Dorsolateral prefrontal cortex (tissue), 120 donors: ENCODE measurements at regions of chr6 and their contacts with region 1.

Region 1: DNA sequence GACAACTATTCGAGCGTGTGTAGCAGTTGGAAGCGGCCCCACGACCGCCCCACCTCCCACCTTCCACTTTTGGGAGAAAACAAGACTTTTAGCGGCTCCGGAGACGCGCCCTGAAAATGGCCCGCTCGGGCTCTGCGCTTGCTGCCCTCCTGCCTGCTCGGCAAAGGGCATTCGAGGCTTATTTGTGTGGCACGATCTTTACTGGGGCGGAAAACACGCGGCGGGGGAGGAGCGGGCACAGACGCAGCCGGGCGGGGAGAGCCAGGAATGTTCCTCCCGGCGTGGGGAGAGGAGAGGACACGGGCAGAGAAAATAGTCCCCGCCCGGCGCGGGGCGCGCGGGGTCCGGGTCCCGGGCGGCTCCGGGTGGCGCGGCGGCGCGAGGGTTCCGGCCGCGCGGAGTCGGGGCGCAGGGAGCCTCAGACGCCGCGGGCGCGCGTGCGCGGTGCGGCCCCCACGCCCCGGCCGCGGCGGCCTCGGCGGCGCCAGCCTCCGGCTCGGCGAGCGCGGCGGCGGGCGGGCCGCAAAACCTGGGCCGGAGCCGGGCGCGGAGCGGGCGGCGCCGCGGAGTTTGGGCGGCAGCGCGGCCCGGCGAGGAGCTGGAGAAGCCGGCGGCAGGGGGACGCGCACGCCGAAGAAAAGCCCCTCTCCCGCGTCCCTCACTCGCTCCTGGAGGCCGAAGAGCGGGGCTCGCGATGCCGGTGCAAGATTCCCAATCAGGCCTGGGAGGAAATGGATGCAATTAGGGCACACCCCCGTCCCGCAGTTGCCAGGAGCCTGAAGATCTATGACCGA is 90.0 kb upstream of the ARID1B start:
- DNase-seq: peak; percentile 79 to 97 (median 92)
- H3K4me3 ChIP-seq: peak overlapping the region; percentile 56 to 86 (median 77)
- H3K27ac ChIP-seq: peak overlapping the region; percentile 92 to 100 (median 99)
- H3K27me3 ChIP-seq: no peaks in the 10 kb centered on the region
- CTCF ChIP-seq: peak in 4 of 56 donors; percentile 1 to 9 (median 6)

Region 2: GRCh38 chr6:156280065-156280464 is 407.1 kb before region 1 on chr6:
- intact Hi-C with region 1: loop called in 1 of 2 experiments (anchors 10 kb)
- DNase-seq: no peak
- H3K4me3 ChIP-seq: no peak overlapping the region
- H3K27ac ChIP-seq: no peak overlapping the region
- H3K27me3 ChIP-seq: no peaks in the 10 kb centered on the region
- CTCF ChIP-seq: no peak

Region 3: DNA sequence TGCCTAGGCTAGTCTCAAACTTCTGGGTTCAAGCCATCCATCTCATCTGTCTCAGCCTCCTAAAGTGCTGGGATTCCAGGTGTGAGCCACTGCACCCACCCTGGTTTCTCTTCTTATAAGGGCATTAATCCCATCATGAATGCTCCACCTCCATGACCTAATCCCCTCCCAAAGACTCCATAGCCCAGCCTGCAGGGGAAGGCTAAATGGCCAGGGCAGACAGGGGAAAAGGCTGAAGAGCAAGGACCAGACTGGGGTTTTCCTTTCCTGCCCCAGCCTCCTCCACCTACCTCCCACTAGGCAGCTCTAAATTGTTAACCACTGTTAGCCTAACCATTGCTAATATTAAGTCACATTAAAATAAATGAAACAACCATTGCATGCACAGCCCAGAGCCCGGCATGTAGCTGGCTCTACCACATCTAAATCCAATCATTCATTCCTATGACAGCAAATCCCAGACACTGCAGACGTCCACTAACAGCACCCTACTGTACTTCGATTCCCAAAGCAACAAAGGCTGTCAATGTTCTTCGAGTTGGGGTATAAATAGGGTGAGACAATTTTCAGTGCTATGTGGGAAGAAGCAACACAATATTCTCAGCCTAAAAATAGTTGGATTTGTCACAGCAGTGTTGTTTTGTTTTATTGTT is 153.2 kb before region 1 on chr6:
- intact Hi-C with region 1: no loop called
- DNase-seq: no peak
- H3K4me3 ChIP-seq: peak overlapping the region in 1 of 59 donors; percentile 17
- H3K27ac ChIP-seq: peak overlapping the region in 8 of 59 donors; percentile 4 to 66 (median 30)
- H3K27me3 ChIP-seq: no peaks in the 10 kb centered on the region
- CTCF ChIP-seq: no peak

Region 4: DNA sequence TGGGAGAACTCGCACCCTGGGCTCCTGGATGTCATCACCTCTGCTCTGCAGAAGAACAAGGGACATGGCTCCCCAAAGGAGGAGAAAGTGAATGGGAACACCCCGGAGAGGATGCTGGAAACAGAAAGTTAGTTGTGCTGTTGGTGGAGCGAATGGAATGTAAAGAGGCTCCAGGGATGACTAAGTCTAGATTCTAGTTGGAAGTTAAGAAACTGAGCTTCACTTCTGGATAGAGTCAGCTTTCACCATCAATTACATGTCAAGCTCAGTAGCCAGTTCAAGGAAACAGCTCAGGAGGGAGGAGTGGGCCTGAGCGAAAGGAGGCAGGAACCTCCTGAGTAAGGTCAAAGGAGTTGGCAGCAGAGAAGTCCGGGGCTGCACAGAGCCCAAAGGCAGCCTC is 42.1 kb before region 1 on chr6:
- intact Hi-C with region 1: no loop called
- DNase-seq: no peak
- H3K4me3 ChIP-seq: no peak overlapping the region
- H3K27ac ChIP-seq: no peak overlapping the region
- H3K27me3 ChIP-seq: no peaks in the 10 kb centered on the region
- CTCF ChIP-seq: no peak

Region 5: GRCh38 chr6:156729248-156729647 is 42.1 kb after region 1 on chr6:
- intact Hi-C with region 1: no loop called
- DNase-seq: no peak
- H3K4me3 ChIP-seq: no peak overlapping the region
- H3K27ac ChIP-seq: no peak overlapping the region
- H3K27me3 ChIP-seq: no peaks in the 10 kb centered on the region
- CTCF ChIP-seq: no peak

Region 6: DNA sequence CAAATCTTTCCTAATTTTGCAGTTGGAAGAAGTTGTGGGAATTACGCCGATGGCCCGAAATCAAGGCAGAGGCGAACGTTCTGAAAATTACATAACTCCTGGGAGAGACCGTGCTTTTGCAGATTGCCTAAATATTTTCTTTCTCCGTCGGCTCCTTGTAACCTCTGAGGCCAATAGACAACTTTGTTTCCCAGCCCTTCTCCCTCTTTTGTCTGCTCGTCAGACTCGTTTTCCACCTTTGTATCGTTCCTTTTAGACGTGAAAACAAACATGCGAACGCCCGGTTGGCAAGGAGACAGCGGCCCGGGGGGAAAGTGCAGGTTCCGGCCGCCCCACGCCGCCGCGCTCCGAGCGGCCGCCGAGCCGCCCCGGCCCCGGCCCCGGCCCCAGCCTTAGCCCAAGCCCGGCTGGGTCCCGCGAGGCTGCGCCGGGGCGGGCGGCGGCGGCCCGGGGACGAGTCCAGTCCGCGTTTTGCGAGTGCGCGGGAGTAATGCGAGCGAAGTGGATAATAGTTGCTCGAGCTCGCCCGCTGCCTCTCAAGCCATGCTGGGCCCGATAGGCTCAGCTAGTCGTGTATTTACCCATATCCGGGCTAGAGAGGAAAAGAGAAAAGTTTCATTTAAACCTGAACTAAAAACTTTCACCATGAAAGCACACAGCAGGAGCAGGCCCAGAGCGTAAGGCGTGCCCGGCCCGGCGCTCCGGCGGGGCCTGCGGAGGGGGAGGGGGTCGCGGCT is 89.8 kb after region 1 on chr6 and contains the start of gene ARID1B:
- intact Hi-C with region 1: loop called (anchors 1 kb)
- DNase-seq: peak; percentile 63 to 86 (median 76)
- H3K4me3 ChIP-seq: peak within 1 kb of the TSS; percentile 43 to 89 (median 77)
- H3K27ac ChIP-seq: peak within 1 kb of the TSS; percentile 93 to 100 (median 99)
- H3K27me3 ChIP-seq: no peaks in the 10 kb centered on the region
- CTCF ChIP-seq: peak in 1 of 56 donors; percentile 9
- total RNA-seq, gene ARID1B: 96.8 to 200 (median 147) TPM

Region 7: DNA sequence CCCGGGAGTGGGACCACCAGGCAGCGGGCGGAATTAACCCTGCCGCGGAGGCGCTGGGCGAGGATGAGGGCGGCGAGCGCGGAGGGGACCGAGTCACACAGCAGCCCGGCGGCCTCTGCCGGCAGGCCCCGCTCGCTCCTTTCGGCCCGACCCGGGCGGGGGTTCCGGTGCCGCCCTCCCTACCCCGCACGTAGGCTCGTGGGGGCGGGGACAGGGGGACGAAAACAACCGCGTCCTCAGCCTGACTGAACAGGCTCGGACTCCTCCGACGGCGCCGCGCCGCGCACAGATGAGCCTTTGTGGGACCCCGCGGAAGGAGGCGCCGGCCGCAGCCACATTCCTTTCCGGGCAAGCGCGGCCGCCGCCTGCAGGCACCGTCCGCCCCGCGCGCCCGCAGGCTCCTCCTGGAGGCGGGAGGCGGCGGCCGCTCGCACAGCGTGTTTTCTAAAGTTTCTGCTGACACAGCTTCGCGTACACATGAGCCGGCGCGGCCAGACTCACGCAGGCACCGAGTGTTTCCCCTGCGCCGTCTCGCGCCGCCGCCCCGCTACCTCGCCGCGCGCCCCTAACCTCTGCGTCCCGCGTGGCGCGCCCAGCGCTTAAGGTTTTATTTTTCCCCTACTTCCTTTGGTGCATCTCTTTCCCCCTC is 334.3 kb after region 1 on chr6:
- intact Hi-C with region 1: loop called (anchors 1 to 2 kb)
- DNase-seq: peak; percentile 82 to 93 (median 89)
- H3K4me3 ChIP-seq: peak overlapping the region; percentile 48 to 98 (median 83)
- H3K27ac ChIP-seq: peak overlapping the region; percentile 89 to 100 (median 99)
- H3K27me3 ChIP-seq: no peaks in the 10 kb centered on the region
- CTCF ChIP-seq: peak in 51 of 56 donors; percentile 5 to 67 (median 43)

Region 8: GRCh38 chr6:157274471-157275226 is 587.5 kb after region 1 on chr6:
- intact Hi-C with region 1: loop called in 1 of 2 experiments (anchors 10 kb)
- DNase-seq: peak in 9 of 10 donors; percentile 44 to 87 (median 57)
- H3K4me3 ChIP-seq: peak overlapping the region; percentile 45 to 88 (median 72)
- H3K27ac ChIP-seq: peak overlapping the region in 58 of 59 donors; percentile 4 to 97 (median 86)
- H3K27me3 ChIP-seq: no peaks in the 10 kb centered on the region
- CTCF ChIP-seq: peak in 54 of 56 donors; percentile 22 to 94 (median 74)